Vagina (tissue), 2 donors: ENCODE measurements at regions of chr4 and their contacts with region 1.

Region 1: DNA sequence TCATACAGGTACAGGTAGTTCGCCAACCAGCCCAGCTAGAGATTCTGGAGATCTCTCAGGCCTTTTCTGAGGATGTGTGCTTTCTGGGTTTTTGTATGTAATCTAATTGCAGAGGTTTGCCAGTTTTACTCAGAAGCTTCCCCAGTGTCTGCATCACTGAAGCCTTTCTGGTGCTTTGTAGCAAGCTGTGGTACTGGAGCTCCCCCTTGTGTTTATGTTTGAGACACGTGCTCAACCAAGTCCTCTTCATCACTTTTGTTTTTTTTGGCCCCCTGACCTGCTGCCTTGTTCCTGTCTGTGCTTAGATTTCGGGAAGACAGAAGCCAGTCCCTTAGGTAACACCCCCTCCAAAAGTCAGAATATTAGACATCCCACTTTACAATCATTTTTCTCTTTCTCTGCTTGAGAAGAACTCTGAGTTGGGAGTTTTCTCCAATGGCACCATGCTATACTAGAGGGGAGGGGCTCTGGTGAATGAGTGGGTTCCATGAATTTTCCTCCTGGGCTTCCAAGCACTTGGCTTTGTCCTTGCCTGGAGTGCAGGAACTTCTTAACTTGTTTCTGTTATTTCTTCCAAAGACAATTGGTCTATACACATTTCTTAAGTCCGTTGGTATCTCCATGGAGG is 128.4 kb upstream of the TBC1D9 start:
- DNase-seq: no peak
- H3K4me3 ChIP-seq: no peak overlapping the region
- H3K27ac ChIP-seq: no peak overlapping the region
- H3K4me1 ChIP-seq: no peaks in the 10 kb centered on the region
- H3K27me3 ChIP-seq: no peaks in the 10 kb centered on the region
- CTCF ChIP-seq: peak in 2 of 3 experiments; percentile 33 to 40
- POLR2A ChIP-seq: no peak

Region 2: DNA sequence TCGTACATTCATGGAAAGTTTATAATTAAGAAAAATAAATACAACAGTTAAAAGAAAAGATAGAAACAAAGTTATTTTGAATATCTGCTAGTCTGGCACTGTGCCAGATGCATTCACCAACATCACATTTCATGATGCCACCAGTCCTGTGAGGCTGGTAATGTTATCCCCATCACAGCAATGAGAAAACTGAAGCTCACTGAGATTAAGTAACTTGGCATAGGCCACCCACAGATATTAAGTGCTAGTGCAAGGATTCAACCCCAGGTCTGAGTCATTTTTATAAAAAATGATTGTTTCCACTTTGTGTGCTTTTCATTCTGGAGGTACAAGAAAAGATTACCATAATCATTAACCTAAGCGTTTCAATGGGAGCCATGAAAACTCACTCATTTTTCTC is 686.8 kb after region 1 on chr4:
- intact Hi-C with region 1: loop called (anchors 10 kb)
- DNase-seq: no peak
- H3K4me3 ChIP-seq: no peak overlapping the region
- H3K27ac ChIP-seq: no peak overlapping the region
- H3K4me1 ChIP-seq: no peaks in the 10 kb centered on the region
- H3K27me3 ChIP-seq: no peaks in the 10 kb centered on the region
- CTCF ChIP-seq: no peak
- POLR2A ChIP-seq: no peak